ENCODE measurements at regions of chr2 and their contacts with region 1.

Region 1: DNA sequence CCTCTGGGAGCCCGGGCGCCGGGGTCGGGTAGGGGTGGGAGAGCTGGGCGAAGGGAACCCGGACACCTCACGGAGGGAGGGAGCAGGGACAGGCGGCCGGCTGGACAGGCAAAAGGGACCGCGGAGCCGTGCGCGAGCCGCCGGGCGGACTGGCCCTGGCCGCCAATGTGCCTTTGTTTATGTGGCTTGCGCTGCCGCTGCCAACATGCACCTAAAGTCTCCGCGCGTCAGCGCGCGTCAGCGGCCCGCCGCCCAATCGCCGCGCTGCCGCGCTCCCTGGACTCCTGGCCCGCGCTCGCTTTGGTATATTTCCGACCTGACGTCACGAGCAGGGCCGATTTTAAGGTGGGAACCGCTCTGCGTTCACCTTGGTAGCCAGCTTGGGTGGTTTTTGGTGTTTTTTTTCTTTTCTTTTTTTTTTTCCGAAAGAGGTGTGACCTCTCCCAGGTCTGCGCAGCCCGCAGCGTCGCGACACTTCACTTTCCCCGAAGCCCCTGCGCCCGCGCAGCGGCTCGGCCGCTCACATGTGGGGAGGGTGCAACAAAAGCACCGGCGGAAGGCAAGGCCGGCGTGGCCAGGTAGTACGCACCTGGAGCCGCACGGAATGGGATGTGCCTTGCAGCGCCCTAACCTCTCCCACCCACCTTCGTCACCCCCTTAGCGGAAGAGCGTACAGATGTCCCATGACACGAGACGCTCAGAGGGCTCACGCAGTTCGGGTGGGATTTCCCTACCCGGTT is at the start of gene NR4A2:
- DNase-seq: peak; percentile 87
- H3K4me3 ChIP-seq: peak within 1 kb of the TSS; percentile 58 to 75 (median 72)
- H3K27ac ChIP-seq: peak within 1 kb of the TSS; percentile 98
- H3K4me1 ChIP-seq: peaks cover 14% of the 10 kb centered on the region
- H3K27me3 ChIP-seq: peaks cover 3 to 14% of the 10 kb centered on the region in 2 experiments
- CTCF ChIP-seq: no peak
- POLR2A ChIP-seq: peak; percentile 36
- total RNA-seq, gene NR4A2: 1.0 and 1.8 TPM in 2 replicates

Region 2: DNA sequence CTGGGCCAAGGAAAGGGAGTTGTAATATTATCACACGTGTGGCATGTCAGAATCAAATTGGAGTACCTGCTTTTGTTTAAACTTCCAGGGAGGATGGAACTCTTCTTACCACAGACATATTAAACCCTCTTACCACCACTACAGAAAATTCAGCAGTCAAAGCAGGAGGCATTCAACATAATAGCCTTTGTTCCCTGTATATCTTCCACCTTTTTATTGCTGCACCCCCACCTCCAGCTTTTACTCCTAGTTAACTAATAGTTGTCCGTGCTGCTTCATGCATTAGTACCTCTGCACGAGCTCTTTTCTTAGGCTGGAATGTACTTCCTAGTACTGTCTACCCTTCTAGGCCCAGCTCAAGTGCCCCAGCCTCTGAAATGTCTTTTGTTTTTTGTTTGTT is 14.7 kb after region 1 on chr2:
- CTCF ChIA-PET with region 1: interaction called, 13 read pairs
- POLR2A ChIA-PET with region 1: interaction called, 20 read pairs
- dilution Hi-C with region 1: no loop called
- intact Hi-C with region 1: loop called (anchors 1 kb)
- DNase-seq: no peak
- H3K4me3 ChIP-seq: no peak overlapping the region
- H3K27ac ChIP-seq: no peak overlapping the region
- H3K4me1 ChIP-seq: peaks cover 6% of the 10 kb centered on the region
- H3K27me3 ChIP-seq: no peaks in the 10 kb centered on the region
- CTCF ChIP-seq: no peak
- POLR2A ChIP-seq: no peak

Region 3: DNA sequence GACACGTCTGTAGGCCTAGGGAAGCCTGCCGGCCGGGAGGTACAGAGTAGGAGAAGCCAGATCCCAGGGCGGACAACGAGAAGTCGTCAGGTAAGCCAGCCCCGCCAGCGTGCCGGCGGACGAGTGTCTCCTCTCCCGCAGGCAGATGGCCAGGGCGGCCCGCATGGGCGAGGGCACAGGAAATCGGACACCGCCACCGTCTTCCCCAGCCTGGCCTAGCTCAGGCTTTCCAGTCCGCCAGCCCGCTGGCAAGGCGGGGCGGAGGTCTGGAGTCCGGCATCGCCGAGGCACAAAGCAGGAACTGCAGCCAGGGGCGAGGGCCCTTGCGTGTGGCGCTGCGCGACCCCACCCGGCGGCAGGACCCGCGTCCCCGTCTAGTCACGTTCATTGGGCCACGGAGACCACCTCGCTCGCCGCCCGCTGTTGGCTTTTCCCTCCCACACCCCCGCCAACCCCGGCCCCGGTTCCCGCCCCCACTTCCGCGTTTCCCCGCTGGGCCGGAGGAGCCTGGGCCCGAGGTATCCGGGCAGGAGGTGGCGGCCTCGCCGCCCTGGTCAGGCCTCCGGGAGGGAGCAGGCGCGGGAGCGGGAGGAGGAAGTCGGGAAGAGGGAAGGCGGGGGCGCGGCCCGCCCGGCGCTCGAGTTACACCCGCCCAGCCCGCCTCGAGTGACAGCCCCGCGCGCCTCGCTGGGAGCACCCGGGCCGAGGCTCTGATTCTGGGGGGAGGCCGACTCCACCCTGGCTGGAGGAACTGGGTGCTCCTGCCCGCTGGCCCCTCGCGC is 103.2 kb after region 1 on chr2 and contains the start of gene GPD2:
- CTCF ChIA-PET with region 1: interaction called, 5 read pairs
- POLR2A ChIA-PET with region 1: no interaction called
- dilution Hi-C with region 1: no loop called
- intact Hi-C with region 1: loop called (anchors 1 kb)
- DNase-seq: peak; percentile 81
- H3K4me3 ChIP-seq: peak within 1 kb of the TSS; percentile 43 to 71 (median 58)
- H3K27ac ChIP-seq: peak within 1 kb of the TSS; percentile 92
- H3K4me1 ChIP-seq: peaks cover 20% of the 10 kb centered on the region
- H3K27me3 ChIP-seq: no peaks in the 10 kb centered on the region
- CTCF ChIP-seq: no peak
- POLR2A ChIP-seq: peak; percentile 56
- total RNA-seq, gene GPD2: 29.3 and 37.0 TPM in 2 replicates

Region 4: GRCh38 chr2:156589381-156590079 is 256.8 kb after region 1 on chr2:
- CTCF ChIA-PET with region 1: interaction called, 93 read pairs
- POLR2A ChIA-PET with region 1: no interaction called
- dilution Hi-C with region 1: no loop called
- intact Hi-C with region 1: loop called (anchors 1 kb)
- DNase-seq: peak; percentile 60
- H3K4me3 ChIP-seq: no peak overlapping the region
- H3K27ac ChIP-seq: no peak overlapping the region
- H3K4me1 ChIP-seq: no peaks in the 10 kb centered on the region
- H3K27me3 ChIP-seq: no peaks in the 10 kb centered on the region
- CTCF ChIP-seq: peak; percentile 19 to 40
- POLR2A ChIP-seq: no peak

Region 5: GRCh38 chr2:157182834-157183396 is 850.2 kb after region 1 on chr2:
- CTCF ChIA-PET with region 1: interaction called, 11 read pairs
- POLR2A ChIA-PET with region 1: no interaction called
- dilution Hi-C with region 1: no loop called
- intact Hi-C with region 1: loop called (anchors 2 kb)
- DNase-seq: peak; percentile 94
- H3K4me3 ChIP-seq: no peak overlapping the region
- H3K27ac ChIP-seq: peak overlapping the region; percentile 97
- H3K4me1 ChIP-seq: peaks cover 20% of the 10 kb centered on the region
- H3K27me3 ChIP-seq: no peaks in the 10 kb centered on the region
- CTCF ChIP-seq: no peak
- POLR2A ChIP-seq: peak; percentile 44

Region 6: GRCh38 chr2:157800838-157801495 is 1468.3 kb after region 1 on chr2:
- CTCF ChIA-PET with region 1: no interaction called
- POLR2A ChIA-PET with region 1: no interaction called
- dilution Hi-C with region 1: no loop called
- intact Hi-C with region 1: no loop called
- DNase-seq: no peak
- H3K4me3 ChIP-seq: no peak overlapping the region
- H3K27ac ChIP-seq: no peak overlapping the region
- H3K4me1 ChIP-seq: no peaks in the 10 kb centered on the region
- H3K27me3 ChIP-seq: no peaks in the 10 kb centered on the region
- CTCF ChIP-seq: no peak
- POLR2A ChIP-seq: no peak

Measured in endothelial cell of umbilical vein (primary cell).